PC-3 (cell line): ENCODE measurements at regions of chr12 and their contacts with region 1.

Region 1: DNA sequence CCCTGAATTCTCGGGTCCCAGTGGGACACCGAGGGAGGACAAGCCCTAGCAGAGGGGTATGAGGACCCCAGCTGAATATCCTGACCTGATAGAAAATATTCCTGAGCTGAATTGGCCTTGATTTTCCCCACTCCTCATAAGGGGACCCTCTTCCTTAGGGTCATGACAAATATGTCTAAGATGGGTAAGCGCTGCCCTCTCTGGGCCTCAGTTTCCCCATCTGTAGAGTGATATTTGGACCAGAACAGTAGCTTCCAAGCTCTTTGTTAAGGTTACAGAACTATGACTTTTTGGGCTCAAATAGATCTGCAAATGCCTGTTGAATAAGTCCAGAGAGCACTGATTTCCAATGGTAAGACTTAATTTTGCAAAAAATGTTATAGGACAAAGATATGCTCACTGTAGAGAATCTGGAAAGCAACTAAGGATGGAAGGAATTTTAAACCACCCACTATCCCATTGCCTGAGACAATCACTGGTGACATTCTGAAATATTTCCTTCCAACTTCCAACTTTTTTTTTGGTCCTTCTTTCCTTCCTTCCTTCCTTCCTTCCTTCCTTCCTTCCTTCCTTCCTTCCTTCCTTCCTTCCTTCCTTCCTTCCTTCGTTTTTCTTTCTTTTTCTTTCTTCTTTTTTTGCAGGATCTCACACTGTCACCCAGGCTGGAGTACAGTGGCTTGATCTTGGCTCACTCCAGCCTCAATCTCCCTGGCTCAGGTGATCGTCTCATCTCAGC is 32.0 kb downstream of the MYL2 start:
- DNase-seq: no peak
- ATAC-seq: no peak
- H3K4me3 ChIP-seq: peak overlapping the region; percentile 84; the same call in 1 of the 2 replicates
- H3K27ac ChIP-seq: no peak overlapping the region
- H3K4me1 ChIP-seq: peaks cover 8% of the 10 kb centered on the region; the same call in 1 of the 2 replicates
- H3K27me3 ChIP-seq: no peaks in the 10 kb centered on the region
- CTCF ChIP-seq: no peak; the same call in 1 of the 2 replicates

Region 2: GRCh38 chr12:110704748-110705147 is 183.7 kb before region 1 on chr12:
- CTCF ChIA-PET with region 1: interaction called, 17 read pairs
- POLR2A ChIA-PET with region 1: no interaction called
- intact Hi-C with region 1: loop called (anchors 2 kb)
- DNase-seq: peak; percentile 68
- ATAC-seq: peak; percentile 86
- H3K4me3 ChIP-seq: peak overlapping the region; percentile 7; the same call in 1 of the 2 replicates
- H3K27ac ChIP-seq: no peak overlapping the region
- H3K4me1 ChIP-seq: 0 out of 2 replicates have a peak, but pooled peaks cover 3% of the 10 kb centered on the region
- H3K27me3 ChIP-seq: no peaks in the 10 kb centered on the region
- CTCF ChIP-seq: peak; percentile 82

Region 3: GRCh38 chr12:110718222-110718908 is 170.1 kb before region 1 on chr12:
- CTCF ChIA-PET with region 1: no interaction called
- POLR2A ChIA-PET with region 1: no interaction called
- intact Hi-C with region 1: no loop called
- DNase-seq: no peak
- ATAC-seq: no peak
- H3K4me3 ChIP-seq: no peak overlapping the region
- H3K27ac ChIP-seq: no peak overlapping the region
- H3K4me1 ChIP-seq: no peaks in the 10 kb centered on the region
- H3K27me3 ChIP-seq: no peaks in the 10 kb centered on the region
- CTCF ChIP-seq: no peak

Region 4: GRCh38 chr12:110813285-110813684 is 75.1 kb before region 1 on chr12:
- CTCF ChIA-PET with region 1: no interaction called
- POLR2A ChIA-PET with region 1: no interaction called
- intact Hi-C with region 1: no loop called
- DNase-seq: no peak
- ATAC-seq: no peak
- H3K4me3 ChIP-seq: no peak overlapping the region
- H3K27ac ChIP-seq: no peak overlapping the region
- H3K4me1 ChIP-seq: no peaks in the 10 kb centered on the region
- H3K27me3 ChIP-seq: peaks cover 28% of the 10 kb centered on the region
- CTCF ChIP-seq: no peak

Region 5: DNA sequence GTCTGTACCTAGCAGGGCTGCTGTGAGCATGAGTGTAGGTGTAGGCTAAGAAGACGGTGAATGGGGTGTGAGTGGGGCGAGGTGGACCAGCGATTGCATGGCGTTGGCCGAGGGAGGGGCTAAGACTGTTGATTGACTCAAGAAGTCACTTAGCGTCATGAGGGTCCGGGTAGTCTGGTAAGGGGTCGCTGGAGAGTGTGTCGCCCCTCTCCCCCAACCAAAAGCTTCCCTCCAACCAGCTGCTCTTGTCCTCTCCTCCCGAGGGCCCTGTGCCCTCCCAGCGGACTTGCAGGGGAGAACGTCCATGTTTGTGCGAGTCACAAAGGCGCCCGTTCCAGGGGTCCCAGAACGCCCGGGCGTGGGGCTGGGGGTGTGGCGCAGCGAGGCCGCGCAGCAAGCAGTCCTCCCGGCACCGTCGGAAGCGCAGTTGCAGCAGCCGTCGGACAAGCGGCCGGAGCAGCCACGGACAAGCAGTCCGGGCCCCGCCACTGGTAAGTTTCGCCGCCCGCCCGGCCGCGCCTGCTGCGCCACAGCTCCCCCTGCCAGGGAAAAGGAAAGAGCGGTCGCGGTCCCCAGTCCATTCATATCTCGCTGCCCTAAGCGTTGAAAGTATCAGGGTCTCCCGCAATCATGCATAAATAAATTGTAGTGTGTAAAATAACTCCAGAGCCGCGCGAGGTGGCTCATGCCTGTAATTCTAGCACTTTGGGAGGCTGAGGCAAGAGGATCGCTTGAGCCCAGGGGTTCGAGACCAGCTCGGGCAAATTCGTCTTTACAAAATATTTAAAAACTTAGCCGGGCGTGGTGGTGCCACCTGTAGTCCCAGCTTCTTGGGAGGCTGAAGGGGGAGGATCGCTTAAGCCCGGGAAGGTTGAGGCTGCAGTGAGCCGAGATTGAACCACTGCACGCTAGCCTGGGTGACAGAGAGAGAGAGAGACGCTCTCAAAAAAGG is 41.5 kb before region 1 on chr12 and contains the start of gene CCDC63:
- CTCF ChIA-PET with region 1: no interaction called
- POLR2A ChIA-PET with region 1: no interaction called
- intact Hi-C with region 1: loop called (anchors 2 kb)
- DNase-seq: peak; percentile 62
- ATAC-seq: peak; percentile 94
- H3K4me3 ChIP-seq: peak within 1 kb of the TSS; percentile 66
- H3K27ac ChIP-seq: no peak within 1 kb of the TSS
- H3K4me1 ChIP-seq: no peaks in the 10 kb centered on the region
- H3K27me3 ChIP-seq: peaks cover 20% of the 10 kb centered on the region
- CTCF ChIP-seq: peak; percentile 60; the same call in 1 of the 2 replicates
- total RNA-seq, gene CCDC63: not detected in 2 replicates